ENCODE measurements at regions of chr22 and their contacts with region 1.

Region 1: GRCh38 chr22:23219822-23220484 is 39.6 kb downstream of the BCR start:
- DNase-seq: peak; percentile 65
- ATAC-seq: peak; percentile 83
- H3K4me3 ChIP-seq: peak overlapping the region; percentile 16 to 41 (median 31)
- H3K4me3 Mint-ChIP-seq: peak overlapping the region; percentile 84
- H3K27ac ChIP-seq: peak overlapping the region; percentile 38 to 72
- H3K27ac Mint-ChIP-seq: peak overlapping the region; percentile 93
- H3K4me1 ChIP-seq: peaks cover 70 to 79% of the 10 kb centered on the region in 2 donors
- H3K4me1 Mint-ChIP-seq: peaks cover 82% of the 10 kb centered on the region
- H3K27me3 ChIP-seq: no peaks in the 10 kb centered on the region
- H3K27me3 Mint-ChIP-seq: no peaks in the 10 kb centered on the region
- CTCF ChIP-seq: no peak

Region 2: GRCh38 chr22:22884010-22884887 is 335.7 kb before region 1 on chr22:
- CTCF ChIA-PET with region 1: no interaction called
- POLR2A ChIA-PET with region 1: no interaction called
- intact Hi-C with region 1: no loop called
- DNase-seq: peak; percentile 86
- ATAC-seq: peak; percentile 59
- H3K4me3 ChIP-seq: peak overlapping the region in 2 of 5 experiments; percentile 11 to 44
- H3K4me3 Mint-ChIP-seq: peak overlapping the region; percentile 74
- H3K27ac ChIP-seq: peak overlapping the region; percentile 38 to 56
- H3K27ac Mint-ChIP-seq: peak overlapping the region; percentile 81
- H3K4me1 ChIP-seq: peaks cover 83 to 95% of the 10 kb centered on the region in 2 donors
- H3K4me1 Mint-ChIP-seq: peaks cover 94% of the 10 kb centered on the region
- H3K27me3 ChIP-seq: peaks cover 0 to 10% (median 3%) of the 10 kb centered on the region in 4 experiments
- H3K27me3 Mint-ChIP-seq: peaks cover 10% of the 10 kb centered on the region
- CTCF ChIP-seq: peak; percentile 77

Region 3: DNA sequence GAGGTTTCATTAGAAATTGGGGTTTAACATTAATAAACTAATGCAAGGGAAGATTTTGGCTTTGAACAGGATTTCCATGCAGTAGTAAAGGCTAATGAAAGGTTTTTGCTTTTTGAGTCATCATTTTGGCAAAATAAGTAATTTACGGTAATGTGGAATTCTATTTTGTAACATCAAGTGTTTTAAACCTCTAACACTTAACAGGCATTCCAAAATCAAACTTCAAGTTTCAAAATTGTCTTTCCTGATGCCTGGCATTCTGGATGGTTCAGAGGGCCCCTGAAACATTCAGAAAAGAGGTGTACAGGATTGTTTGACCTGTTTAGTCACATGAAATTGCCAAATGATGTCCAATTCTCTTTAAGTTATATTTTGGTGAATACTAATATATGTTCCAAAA is 240.0 kb before region 1 on chr22:
- CTCF ChIA-PET with region 1: no interaction called
- POLR2A ChIA-PET with region 1: no interaction called
- intact Hi-C with region 1: no loop called
- DNase-seq: no peak
- ATAC-seq: no peak
- H3K4me3 ChIP-seq: no peak overlapping the region
- H3K4me3 Mint-ChIP-seq: no peak overlapping the region
- H3K27ac ChIP-seq: no peak overlapping the region
- H3K27ac Mint-ChIP-seq: no peak overlapping the region
- H3K4me1 ChIP-seq: peaks cover 12 to 18% of the 10 kb centered on the region in 2 donors
- H3K4me1 Mint-ChIP-seq: peaks cover 17% of the 10 kb centered on the region
- H3K27me3 ChIP-seq: no peaks in the 10 kb centered on the region
- H3K27me3 Mint-ChIP-seq: peaks cover 16% of the 10 kb centered on the region
- CTCF ChIP-seq: no peak

Region 4: DNA sequence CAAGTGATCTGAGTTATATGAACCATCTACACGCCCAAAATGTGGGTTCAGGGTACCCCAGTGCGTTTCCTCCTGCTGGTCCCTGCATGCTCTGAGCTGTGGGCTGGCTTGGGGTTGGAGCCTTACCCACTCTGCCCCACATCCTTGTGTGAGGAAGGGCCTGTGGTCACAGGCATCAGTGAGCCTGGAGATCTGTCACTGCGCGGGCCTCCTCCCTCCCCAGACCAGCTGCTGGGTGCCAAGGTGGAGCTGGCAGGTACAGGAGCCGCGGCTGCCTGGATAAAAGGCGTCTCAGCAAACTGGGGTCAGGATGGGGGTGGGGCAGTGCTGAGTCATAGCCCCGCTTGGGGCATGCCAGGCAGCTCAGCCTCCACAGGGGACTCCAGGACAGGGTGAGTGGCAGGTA is 131.8 kb before region 1 on chr22:
- CTCF ChIA-PET with region 1: no interaction called
- POLR2A ChIA-PET with region 1: no interaction called
- intact Hi-C with region 1: no loop called
- DNase-seq: no peak
- ATAC-seq: no peak
- H3K4me3 ChIP-seq: no peak overlapping the region
- H3K4me3 Mint-ChIP-seq: no peak overlapping the region
- H3K27ac ChIP-seq: no peak overlapping the region
- H3K27ac Mint-ChIP-seq: no peak overlapping the region
- H3K4me1 ChIP-seq: peaks cover 27 to 29% of the 10 kb centered on the region in 2 donors
- H3K4me1 Mint-ChIP-seq: peaks cover 24% of the 10 kb centered on the region
- H3K27me3 ChIP-seq: no peaks in the 10 kb centered on the region
- H3K27me3 Mint-ChIP-seq: no peaks in the 10 kb centered on the region
- CTCF ChIP-seq: no peak

Region 5: DNA sequence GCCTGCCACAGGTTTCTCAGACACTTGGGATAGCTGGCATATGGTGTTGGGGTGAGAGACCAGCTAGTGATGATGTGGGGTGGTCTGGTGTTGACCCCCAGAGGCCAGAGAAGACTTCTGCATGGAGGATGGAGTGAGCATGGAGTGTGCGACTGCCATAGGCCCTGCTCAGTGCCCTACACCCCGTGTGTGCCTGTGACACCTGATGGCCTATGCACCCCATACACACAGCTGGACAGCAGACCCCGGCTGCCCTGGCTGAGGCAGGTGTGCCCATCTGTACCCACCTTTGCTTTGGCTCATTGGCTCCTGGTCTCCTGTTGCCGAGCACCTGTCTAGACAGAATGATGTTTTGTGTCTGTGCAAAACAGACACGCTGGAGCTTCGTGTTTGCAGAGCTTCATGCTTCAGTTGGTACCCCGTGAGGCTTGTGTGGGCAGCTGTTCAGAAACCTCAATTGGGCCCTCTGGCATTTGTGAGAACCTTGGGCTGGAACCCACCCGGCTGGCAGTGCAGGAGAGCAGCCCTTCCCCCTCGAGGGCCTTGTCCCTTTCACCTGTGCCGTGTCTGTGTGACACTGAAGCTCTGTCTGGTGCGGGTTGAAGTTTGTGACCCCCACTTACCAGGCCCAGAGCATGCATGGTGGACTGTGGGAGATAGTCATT is 12.1 kb before region 1 on chr22:
- CTCF ChIA-PET with region 1: interaction called, 13 read pairs
- POLR2A ChIA-PET with region 1: interaction called, 14 read pairs
- intact Hi-C with region 1: loop called (anchors 1 kb)
- DNase-seq: peak; percentile 65
- ATAC-seq: peak; percentile 86
- H3K4me3 ChIP-seq: no peak overlapping the region
- H3K4me3 Mint-ChIP-seq: peak overlapping the region; percentile 65
- H3K27ac ChIP-seq: no peak overlapping the region
- H3K27ac Mint-ChIP-seq: peak overlapping the region; percentile 86
- H3K4me1 ChIP-seq: peaks cover 25 to 30% of the 10 kb centered on the region in 2 donors
- H3K4me1 Mint-ChIP-seq: peaks cover 36% of the 10 kb centered on the region
- H3K27me3 ChIP-seq: no peaks in the 10 kb centered on the region
- H3K27me3 Mint-ChIP-seq: peaks cover 5% of the 10 kb centered on the region
- CTCF ChIP-seq: no peak

Region 6: GRCh38 chr22:23240639-23241389 is 20.9 kb after region 1 on chr22:
- CTCF ChIA-PET with region 1: interaction called, 6 read pairs
- POLR2A ChIA-PET with region 1: no interaction called
- intact Hi-C with region 1: loop called (anchors 2 kb)
- DNase-seq: peak; percentile 45
- ATAC-seq: peak; percentile 51
- H3K4me3 ChIP-seq: no peak overlapping the region
- H3K4me3 Mint-ChIP-seq: peak overlapping the region; percentile 5
- H3K27ac ChIP-seq: peak overlapping the region in 1 of 2 donors; percentile 7
- H3K27ac Mint-ChIP-seq: peak overlapping the region; percentile 4
- H3K4me1 ChIP-seq: peaks cover 27 to 41% of the 10 kb centered on the region in 2 donors
- H3K4me1 Mint-ChIP-seq: peaks cover 40% of the 10 kb centered on the region
- H3K27me3 ChIP-seq: no peaks in the 10 kb centered on the region
- H3K27me3 Mint-ChIP-seq: no peaks in the 10 kb centered on the region
- CTCF ChIP-seq: no peak

Region 7: DNA sequence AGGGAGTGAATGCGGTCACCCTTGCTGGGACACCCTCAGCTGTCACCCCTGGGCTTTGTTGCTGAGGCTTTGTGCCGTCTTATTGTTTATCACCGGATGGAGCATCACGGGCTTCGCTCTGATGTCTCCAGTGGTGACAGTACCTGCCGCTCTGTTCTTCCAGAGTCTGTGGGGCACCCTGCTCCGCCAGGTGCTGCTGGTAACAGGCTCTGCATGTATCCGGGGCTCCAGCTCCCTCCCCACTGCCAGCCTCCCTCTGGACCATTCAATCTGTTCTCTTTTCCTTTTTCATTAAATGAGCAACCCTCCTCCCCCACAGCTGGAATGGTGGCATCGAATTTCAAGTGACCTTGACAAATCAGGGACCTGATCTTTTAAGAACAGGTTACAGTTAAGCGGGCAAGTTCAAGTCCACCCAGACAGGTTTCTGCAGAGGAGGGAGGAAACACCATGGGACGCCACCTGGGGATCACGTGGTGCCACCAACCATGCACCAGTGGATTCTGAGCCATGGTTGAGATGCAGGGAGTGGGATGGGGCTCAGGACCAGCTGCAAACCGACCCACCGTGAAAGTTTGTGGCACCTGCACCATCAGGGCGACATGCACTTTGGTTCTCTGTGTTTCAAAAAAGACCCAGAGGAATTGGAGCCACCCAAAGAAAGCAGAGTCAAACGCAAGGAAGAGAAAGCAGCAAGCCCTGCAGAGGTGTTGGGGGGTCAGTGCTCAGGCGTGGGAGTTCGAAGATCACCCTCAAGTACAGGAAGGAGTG is 49.7 kb after region 1 on chr22:
- CTCF ChIA-PET with region 1: no interaction called
- POLR2A ChIA-PET with region 1: interaction called, 4 read pairs
- intact Hi-C with region 1: loop called (anchors 1 kb)
- DNase-seq: peak; percentile 83
- ATAC-seq: peak; percentile 84
- H3K4me3 ChIP-seq: no peak overlapping the region
- H3K4me3 Mint-ChIP-seq: peak overlapping the region; percentile 67
- H3K27ac ChIP-seq: peak overlapping the region; percentile 33 to 62
- H3K27ac Mint-ChIP-seq: peak overlapping the region; percentile 54
- H3K4me1 ChIP-seq: peaks cover 31 to 34% of the 10 kb centered on the region in 2 donors
- H3K4me1 Mint-ChIP-seq: peaks cover 33% of the 10 kb centered on the region
- H3K27me3 ChIP-seq: no peaks in the 10 kb centered on the region
- H3K27me3 Mint-ChIP-seq: no peaks in the 10 kb centered on the region
- CTCF ChIP-seq: no peak

Measured in B cell (primary cell).